CD4-positive, alpha-beta T cell (primary cell): ENCODE measurements at regions of chr20 and their contacts with region 1.

Region 1: GRCh38 chr20:2873010-2873746 is at the start of gene PTPRA:
- DNase-seq: peak; percentile 83 to 95 (median 89)
- ATAC-seq: peak; percentile 87
- H3K4me3 ChIP-seq: peak within 1 kb of the TSS; percentile 91
- H3K4me3 Mint-ChIP-seq: peak within 1 kb of the TSS; percentile 96
- H3K27ac ChIP-seq: peak within 1 kb of the TSS in 1 of 2 donors; percentile 34
- H3K27ac Mint-ChIP-seq: peak within 1 kb of the TSS; percentile 94
- H3K4me1 ChIP-seq: peaks cover 38% of the 10 kb centered on the region
- H3K4me1 Mint-ChIP-seq: peaks cover 42% of the 10 kb centered on the region
- H3K27me3 ChIP-seq: peaks cover 0 to 3% of the 10 kb centered on the region in 2 experiments
- H3K27me3 Mint-ChIP-seq: no peaks in the 10 kb centered on the region
- CTCF ChIP-seq: no peak
- total RNA-seq, gene PTPRA: 65.4 to 69.5 TPM

Region 2: GRCh38 chr20:2523919-2524708 is 349.1 kb before region 1 on chr20:
- CTCF ChIA-PET with region 1: interaction called, 3 read pairs
- POLR2A ChIA-PET with region 1: no interaction called
- intact Hi-C with region 1: loop called in 1 of 2 experiments (anchors 10 kb)
- DNase-seq: peak; percentile 84 to 96 (median 91)
- ATAC-seq: peak; percentile 82
- H3K4me3 ChIP-seq: peak overlapping the region; percentile 94
- H3K4me3 Mint-ChIP-seq: peak overlapping the region; percentile 91
- H3K27ac ChIP-seq: peak overlapping the region; percentile 7 to 23
- H3K27ac Mint-ChIP-seq: peak overlapping the region; percentile 37
- H3K4me1 ChIP-seq: peaks cover 19% of the 10 kb centered on the region
- H3K4me1 Mint-ChIP-seq: peaks cover 15% of the 10 kb centered on the region
- H3K27me3 ChIP-seq: no peaks in the 10 kb centered on the region
- H3K27me3 Mint-ChIP-seq: no peaks in the 10 kb centered on the region
- CTCF ChIP-seq: peak; percentile 98

Region 3: DNA sequence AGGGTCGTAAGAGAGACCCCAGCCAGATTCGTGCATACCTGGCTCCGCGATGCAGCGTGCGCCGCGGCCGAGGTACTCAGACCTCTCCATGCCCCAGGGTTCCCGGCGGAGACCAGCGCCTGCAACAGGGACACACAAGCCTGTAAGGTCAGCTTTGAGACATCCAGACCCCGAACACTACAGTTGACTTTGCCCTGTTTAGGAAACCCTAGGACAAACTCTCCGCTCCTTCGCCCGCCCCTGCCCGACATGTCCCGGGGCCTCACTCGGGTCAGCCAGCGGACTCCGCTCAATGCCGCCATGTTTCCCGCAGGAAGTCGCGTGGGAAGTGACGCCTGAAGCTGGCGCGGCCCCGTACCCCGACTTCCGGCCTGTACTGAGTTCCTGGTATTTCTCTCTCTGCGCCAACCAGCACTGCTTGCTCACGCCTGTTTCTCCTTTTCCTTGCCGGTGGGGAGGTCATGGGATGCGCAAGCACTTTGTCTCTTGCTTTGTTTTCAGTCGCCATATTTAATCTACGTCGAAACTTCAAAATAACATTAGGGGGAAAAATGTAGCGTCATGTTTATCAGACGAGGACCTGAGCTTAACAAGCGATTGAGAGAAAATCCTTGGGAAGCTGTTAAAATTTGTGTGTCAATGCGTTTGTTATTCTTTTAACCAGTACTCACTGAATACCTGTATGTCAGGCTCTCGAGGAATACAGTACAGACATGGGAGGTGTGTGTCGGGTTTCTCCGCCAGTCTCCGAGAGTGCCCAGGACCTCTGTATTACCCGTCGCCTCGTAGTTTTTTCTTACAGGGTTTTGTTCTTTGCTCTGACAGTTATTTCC is 209.1 kb before region 1 on chr20 and contains the start of gene IDH3B:
- CTCF ChIA-PET with region 1: no interaction called
- POLR2A ChIA-PET with region 1: interaction called, 6 read pairs
- intact Hi-C with region 1: loop called in 1 of 2 experiments (anchors 5 kb)
- DNase-seq: peak; percentile 83 to 96 (median 89)
- ATAC-seq: peak; percentile 99
- H3K4me3 ChIP-seq: peak within 1 kb of the TSS; percentile 90
- H3K4me3 Mint-ChIP-seq: peak within 1 kb of the TSS; percentile 94
- H3K27ac ChIP-seq: peak within 1 kb of the TSS; percentile 77 to 96
- H3K27ac Mint-ChIP-seq: peak within 1 kb of the TSS; percentile 91
- H3K4me1 ChIP-seq: peaks cover 18% of the 10 kb centered on the region
- H3K4me1 Mint-ChIP-seq: peaks cover 28% of the 10 kb centered on the region
- H3K27me3 ChIP-seq: no peaks in the 10 kb centered on the region
- H3K27me3 Mint-ChIP-seq: no peaks in the 10 kb centered on the region
- CTCF ChIP-seq: no peak
- total RNA-seq, gene IDH3B: 171 to 181 TPM

Region 4: DNA sequence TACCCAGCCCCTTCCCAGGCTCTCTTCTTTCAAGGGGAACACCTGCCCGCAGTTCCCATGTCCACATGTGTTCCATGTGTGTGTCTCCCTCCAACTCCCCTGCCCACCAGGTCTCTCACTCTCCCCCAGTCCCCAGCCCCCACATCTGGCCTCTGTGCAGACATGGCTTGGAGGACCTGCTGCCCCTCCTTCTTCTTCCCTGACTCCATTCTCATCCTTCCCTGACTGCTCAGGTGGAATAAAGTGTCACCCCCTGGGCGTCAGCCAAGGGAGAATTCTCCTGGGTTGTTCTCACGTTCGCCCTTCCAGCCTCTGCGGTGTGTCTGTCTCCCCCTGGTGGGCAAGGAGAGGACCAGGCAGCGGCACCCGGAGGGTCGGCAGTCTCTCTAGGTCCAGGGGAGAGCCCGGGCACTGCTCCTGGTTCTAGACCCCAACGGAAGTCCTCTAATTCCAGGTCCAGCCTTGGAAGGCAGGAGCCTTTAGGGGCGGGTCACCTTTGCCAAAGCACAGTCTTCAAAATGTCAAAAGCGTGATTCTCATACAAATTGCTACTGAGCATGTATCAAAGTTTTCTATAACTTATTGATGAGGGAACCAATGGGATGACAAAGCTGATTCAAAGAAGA is 130.1 kb before region 1 on chr20:
- CTCF ChIA-PET with region 1: no interaction called
- POLR2A ChIA-PET with region 1: interaction called, 15 read pairs
- intact Hi-C with region 1: no loop called
- DNase-seq: peak; percentile 60 to 88 (median 70)
- ATAC-seq: peak; percentile 54
- H3K4me3 ChIP-seq: no peak overlapping the region
- H3K4me3 Mint-ChIP-seq: peak overlapping the region; percentile 59
- H3K27ac ChIP-seq: peak overlapping the region in 1 of 2 donors; percentile 60
- H3K27ac Mint-ChIP-seq: peak overlapping the region; percentile 90
- H3K4me1 ChIP-seq: peaks cover 47% of the 10 kb centered on the region
- H3K4me1 Mint-ChIP-seq: peaks cover 51% of the 10 kb centered on the region
- H3K27me3 ChIP-seq: no peaks in the 10 kb centered on the region
- H3K27me3 Mint-ChIP-seq: no peaks in the 10 kb centered on the region
- CTCF ChIP-seq: peak; percentile 90

Region 5: GRCh38 chr20:2780948-2781347 is 92.2 kb before region 1 on chr20:
- CTCF ChIA-PET with region 1: no interaction called
- POLR2A ChIA-PET with region 1: no interaction called
- intact Hi-C with region 1: no loop called
- DNase-seq: no peak
- ATAC-seq: no peak
- H3K4me3 ChIP-seq: no peak overlapping the region
- H3K4me3 Mint-ChIP-seq: no peak overlapping the region
- H3K27ac ChIP-seq: no peak overlapping the region
- H3K27ac Mint-ChIP-seq: no peak overlapping the region
- H3K4me1 ChIP-seq: no peaks in the 10 kb centered on the region
- H3K4me1 Mint-ChIP-seq: no peaks in the 10 kb centered on the region
- H3K27me3 ChIP-seq: no peaks in the 10 kb centered on the region
- H3K27me3 Mint-ChIP-seq: peaks cover 32% of the 10 kb centered on the region
- CTCF ChIP-seq: no peak

Region 6: GRCh38 chr20:2840138-2840966 is 32.8 kb before region 1 on chr20 and contains the starts of genes PCED1A and VPS16:
- CTCF ChIA-PET with region 1: interaction called, 7 read pairs
- POLR2A ChIA-PET with region 1: interaction called, 19 read pairs
- intact Hi-C with region 1: loop called in 1 of 2 experiments (anchors 1 kb)
- DNase-seq: peak; percentile 78 to 94 (median 86)
- ATAC-seq: peak; percentile 95
- H3K4me3 ChIP-seq: peak within 1 kb of the TSS; percentile 93
- H3K4me3 Mint-ChIP-seq: peak within 1 kb of the TSS; percentile 93
- H3K27ac ChIP-seq: peak within 1 kb of the TSS; percentile 61 to 81
- H3K27ac Mint-ChIP-seq: peak within 1 kb of the TSS; percentile 75
- H3K4me1 ChIP-seq: peaks cover 31% of the 10 kb centered on the region
- H3K4me1 Mint-ChIP-seq: peaks cover 53% of the 10 kb centered on the region
- H3K27me3 ChIP-seq: no peaks in the 10 kb centered on the region
- H3K27me3 Mint-ChIP-seq: no peaks in the 10 kb centered on the region
- CTCF ChIP-seq: no peak
- total RNA-seq, gene PCED1A: 69.2 to 69.7 TPM
- total RNA-seq, gene VPS16: 38.2 to 40.6 TPM

Region 7: GRCh38 chr20:2984956-2985661 is 111.9 kb after region 1 on chr20:
- CTCF ChIA-PET with region 1: no interaction called
- POLR2A ChIA-PET with region 1: no interaction called
- intact Hi-C with region 1: loop called (anchors 5 kb)
- DNase-seq: no peak
- ATAC-seq: no peak
- H3K4me3 ChIP-seq: no peak overlapping the region
- H3K4me3 Mint-ChIP-seq: no peak overlapping the region
- H3K27ac ChIP-seq: no peak overlapping the region
- H3K27ac Mint-ChIP-seq: no peak overlapping the region
- H3K4me1 ChIP-seq: peaks cover 5% of the 10 kb centered on the region
- H3K4me1 Mint-ChIP-seq: peaks cover 5% of the 10 kb centered on the region
- H3K27me3 ChIP-seq: no peaks in the 10 kb centered on the region
- H3K27me3 Mint-ChIP-seq: no peaks in the 10 kb centered on the region
- CTCF ChIP-seq: no peak

Region 8: GRCh38 chr20:3045816-3046676 is 172.9 kb after region 1 on chr20 and contains the start of gene MRPS26:
- CTCF ChIA-PET with region 1: no interaction called
- POLR2A ChIA-PET with region 1: no interaction called
- intact Hi-C with region 1: loop called in 1 of 2 experiments (anchors 10 kb)
- DNase-seq: peak; percentile 57 to 87 (median 76)
- ATAC-seq: peak; percentile 86
- H3K4me3 ChIP-seq: peak within 1 kb of the TSS; percentile 76
- H3K4me3 Mint-ChIP-seq: peak within 1 kb of the TSS; percentile 95
- H3K27ac ChIP-seq: peak within 1 kb of the TSS; percentile 48 to 49
- H3K27ac Mint-ChIP-seq: peak within 1 kb of the TSS; percentile 83
- H3K4me1 ChIP-seq: peaks cover 27% of the 10 kb centered on the region
- H3K4me1 Mint-ChIP-seq: peaks cover 21% of the 10 kb centered on the region
- H3K27me3 ChIP-seq: no peaks in the 10 kb centered on the region
- H3K27me3 Mint-ChIP-seq: no peaks in the 10 kb centered on the region
- CTCF ChIP-seq: no peak
- total RNA-seq, gene MRPS26: 19.3 to 22.7 TPM